ENCODE measurements at regions of chr22 and their contacts with region 1.

Region 1: GRCh38 chr22:31970490-31971444 is 26.4 kb downstream of the YWHAH start:
- DNase-seq: peak; percentile 81

Region 2: DNA sequence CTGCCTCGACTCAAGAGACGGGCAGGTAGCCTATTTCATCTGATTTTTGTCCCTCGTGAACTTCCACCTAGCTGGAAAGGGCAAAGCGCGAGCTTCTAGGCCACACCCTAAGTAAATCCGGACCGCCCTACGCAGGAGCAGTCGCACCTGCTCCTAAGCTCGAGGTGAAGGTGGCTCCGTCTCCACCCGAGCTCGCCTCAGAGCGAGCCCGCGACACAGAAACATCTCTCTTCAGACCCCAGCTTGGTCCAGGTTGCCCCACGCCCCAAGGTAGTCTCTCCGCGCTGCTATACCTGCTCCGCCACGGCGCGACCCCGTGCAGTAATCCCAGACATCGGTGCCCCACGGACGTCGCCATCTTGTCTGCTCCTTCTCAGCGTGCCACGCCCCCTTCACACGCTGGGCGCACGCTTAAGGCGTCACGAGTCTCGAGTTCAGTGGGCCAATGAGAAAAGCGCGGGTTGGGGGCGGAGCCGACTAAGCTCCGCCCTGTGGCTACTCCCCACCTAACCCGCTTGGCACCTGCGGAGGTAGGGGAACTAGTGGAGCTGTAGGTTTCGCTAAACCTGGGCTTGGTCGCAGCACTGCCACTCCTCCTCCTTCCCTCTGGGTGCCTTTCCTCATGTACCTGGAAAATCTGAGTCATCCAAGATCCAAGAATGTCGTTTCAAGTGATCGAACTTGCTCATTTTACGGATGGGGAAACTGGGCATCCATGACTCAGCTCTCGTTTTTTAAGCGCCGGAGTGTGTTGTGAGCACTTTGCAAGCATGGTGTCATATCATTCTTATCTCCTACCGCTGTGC is 308.7 kb before region 1 on chr22 and contains the start of gene PISD:
- in situ Hi-C with region 1: loop called (anchors 25 kb)
- DNase-seq: peak; percentile 97

Region 3: DNA sequence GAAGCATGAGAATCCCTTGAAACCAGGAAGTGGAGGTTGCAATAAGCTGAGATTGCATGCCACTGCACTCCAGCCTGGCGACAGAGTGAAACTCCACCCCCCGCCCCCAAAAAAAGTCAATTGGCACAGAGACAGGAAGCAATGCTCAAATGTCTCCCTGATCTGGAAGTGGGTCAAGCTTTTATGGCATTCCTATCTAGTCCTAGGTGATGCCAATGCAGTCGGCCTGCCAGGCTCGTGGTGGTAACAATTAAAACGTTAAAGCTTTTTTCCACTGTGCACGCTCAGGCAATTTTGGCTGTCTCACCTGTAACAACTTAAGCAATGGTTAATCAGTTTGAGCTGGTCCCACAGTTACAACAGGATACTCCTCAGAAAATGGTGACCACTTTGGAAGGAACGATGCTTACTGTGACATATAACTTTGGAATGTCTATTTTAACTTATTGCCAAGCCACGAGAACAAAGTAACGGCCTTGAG is 289.9 kb before region 1 on chr22:
- in situ Hi-C with region 1: no loop called
- DNase-seq: peak; percentile 35

Region 4: GRCh38 chr22:31929167-31929930 is 41.4 kb before region 1 on chr22:
- in situ Hi-C with region 1: no loop called
- DNase-seq: no peak

Measured in ACHN (cell line).